RWPE1 (cell line): ENCODE measurements at regions of chr20 and their contacts with region 1.

Region 1: DNA sequence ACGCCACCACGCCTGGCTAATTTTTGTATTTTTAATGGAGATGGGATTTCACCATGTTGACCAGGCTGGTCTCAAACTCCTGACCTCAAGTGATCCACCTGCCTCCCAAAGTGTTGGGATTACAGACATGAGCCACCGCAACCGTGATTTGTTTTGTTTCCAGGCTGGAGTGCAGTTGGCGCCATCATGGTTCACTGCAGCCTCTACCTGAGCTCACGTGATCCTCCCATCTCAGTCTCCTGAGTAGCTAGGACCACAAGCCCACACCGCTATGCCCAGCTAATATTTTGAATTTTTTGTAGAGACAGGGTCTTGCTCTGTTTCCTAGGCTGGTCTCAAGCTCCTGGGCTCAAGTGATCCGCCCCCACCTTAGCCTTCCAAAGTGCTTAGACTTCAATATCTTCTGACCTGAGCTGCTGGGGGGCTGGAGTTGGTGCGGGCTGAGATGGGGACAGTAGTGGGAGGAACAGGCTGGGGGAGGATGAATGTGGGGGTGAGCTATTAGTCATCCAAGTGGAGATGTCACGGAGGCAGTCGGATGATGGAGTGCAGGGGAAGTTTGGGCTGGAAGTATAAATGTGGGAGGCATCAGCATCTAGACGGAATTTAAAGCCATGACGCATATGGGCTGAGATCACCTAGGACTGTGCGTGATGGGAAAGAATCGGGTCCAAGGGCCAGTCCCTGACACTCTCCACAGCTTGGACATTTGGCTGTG is 23.1 kb upstream of the ZMYND8 start:
- DNase-seq: no peak
- H3K27ac ChIP-seq: peak overlapping the region; percentile 67
- CTCF ChIP-seq: no peak

Region 2: DNA sequence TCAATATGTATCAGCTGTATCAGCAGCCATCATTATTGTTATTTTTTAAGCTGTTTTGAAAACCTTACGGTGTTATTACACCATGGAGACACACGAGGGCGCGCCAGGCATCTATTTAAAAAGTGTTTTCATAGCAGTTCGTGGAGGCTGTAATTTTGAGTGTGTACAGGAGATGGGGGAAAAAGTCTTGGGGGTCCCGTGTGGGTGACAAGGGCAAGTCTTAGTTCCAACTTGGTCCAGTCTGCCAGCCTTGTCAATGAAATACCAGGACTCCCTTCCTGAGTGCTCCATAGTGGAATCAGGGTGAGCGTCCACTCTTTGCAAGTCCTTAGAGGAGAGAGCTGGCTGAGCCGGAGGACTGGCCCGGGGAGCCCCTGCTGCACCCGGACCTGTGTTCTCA is 626.9 kb before region 1 on chr20:
- CTCF ChIA-PET with region 1: interaction called, 40 read pairs
- POLR2A ChIA-PET with region 1: no interaction called
- DNase-seq: peak; percentile 68
- H3K27ac ChIP-seq: no peak overlapping the region
- CTCF ChIP-seq: peak; percentile 95

Region 3: DNA sequence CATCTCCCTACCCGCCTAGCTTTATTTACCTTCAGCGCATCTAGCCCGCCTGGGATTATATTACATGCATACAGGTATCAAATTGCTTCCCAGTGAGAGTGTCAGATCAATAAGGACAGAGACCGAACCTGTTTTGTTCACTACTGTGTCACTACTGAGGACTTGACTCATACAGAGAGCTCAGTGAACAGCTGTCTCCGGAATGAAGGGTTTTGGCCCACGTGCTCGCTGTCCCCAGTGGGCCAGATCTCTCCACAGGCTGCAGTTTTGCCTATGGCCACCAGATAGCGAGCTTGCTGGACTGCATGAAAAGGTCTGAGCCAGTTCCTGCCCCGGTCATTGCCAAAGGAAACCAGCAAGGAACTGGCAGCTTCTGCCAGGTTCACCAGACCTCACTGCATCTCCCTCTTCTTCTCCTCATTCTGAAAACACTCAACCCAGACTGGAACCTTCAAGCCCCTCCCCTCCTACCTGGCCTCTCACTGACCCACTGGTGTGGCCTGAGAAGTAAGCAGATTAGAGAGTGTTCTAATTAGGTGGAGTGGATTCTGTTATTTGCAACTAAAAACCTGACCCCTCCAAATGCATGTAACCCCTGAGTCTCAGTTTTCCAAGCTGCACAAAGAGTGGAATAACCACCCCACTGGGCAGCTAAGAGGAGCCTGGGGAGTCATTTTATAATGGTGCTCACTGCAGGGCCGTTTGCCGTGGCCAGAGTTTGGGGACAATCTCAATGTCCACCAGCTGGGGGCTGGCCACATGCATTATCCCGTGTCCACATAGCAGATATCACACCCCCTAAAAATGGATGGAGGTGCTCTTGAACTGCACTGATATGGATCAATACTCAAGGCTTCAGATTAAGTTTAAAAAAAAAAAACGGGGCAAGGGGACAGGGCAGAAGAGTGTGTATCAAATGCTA is 173.8 kb before region 1 on chr20:
- CTCF ChIA-PET with region 1: interaction called, 50 read pairs
- POLR2A ChIA-PET with region 1: no interaction called
- DNase-seq: peak; percentile 71
- H3K27ac ChIP-seq: peak overlapping the region; percentile 51
- CTCF ChIP-seq: peak; percentile 82

Region 4: DNA sequence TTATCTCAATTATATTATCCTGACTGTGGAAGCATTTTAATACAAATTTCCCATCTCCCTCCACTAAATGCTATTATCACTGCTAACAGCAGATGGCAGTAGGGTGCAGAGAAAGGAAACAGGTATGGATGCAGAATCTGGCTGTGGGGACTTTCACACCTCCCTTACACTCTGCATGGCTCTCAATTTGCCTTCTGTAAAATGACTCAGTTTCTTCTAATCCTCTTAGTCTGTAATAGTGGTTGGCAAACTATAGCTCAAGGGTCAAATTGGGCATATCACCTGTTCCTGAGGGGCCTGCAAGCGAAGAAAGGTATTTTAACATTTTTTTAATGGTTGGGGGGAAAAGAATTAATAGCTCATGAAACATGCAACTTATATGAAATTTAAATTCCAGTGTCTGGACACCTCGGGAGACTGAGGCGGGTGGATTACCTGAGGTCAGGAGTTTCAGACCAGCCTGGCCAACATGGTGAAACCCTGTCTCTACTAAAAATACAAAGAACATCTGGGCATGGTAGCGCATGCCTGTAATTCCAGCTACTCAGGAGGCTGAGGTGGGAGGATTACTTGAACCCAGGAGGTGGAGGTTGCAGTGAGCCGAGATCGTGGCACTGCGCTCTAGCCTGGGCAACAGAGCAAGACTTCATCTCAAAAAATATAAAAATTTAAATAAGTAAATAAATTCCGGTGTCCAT is 106.5 kb before region 1 on chr20:
- CTCF ChIA-PET with region 1: interaction called, 387 read pairs
- POLR2A ChIA-PET with region 1: interaction called, 5 read pairs
- DNase-seq: peak; percentile 85
- H3K27ac ChIP-seq: peak overlapping the region; percentile 64
- CTCF ChIP-seq: peak; percentile 97

Region 5: DNA sequence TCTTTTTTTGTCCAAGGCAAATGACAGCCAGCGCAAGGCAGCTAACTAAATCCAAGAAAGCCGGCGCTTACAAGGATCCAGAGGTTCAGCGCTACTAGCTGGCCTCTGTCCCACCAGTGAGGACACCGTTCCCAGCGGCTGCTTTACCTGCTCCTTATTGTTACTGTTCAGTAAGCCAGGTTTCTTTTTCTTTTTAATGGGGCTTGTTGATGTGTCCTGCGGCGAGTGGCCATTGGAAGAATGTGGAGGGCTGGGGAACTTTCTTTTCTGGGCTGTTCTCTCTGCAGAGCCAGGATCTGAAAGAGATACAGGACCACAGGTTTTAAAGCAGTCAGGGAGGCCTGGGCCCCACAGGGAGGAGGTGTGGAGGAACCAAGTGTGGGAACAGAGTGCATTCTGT is 69.7 kb before region 1 on chr20:
- CTCF ChIA-PET with region 1: interaction called, 31 read pairs
- POLR2A ChIA-PET with region 1: no interaction called
- DNase-seq: no peak
- H3K27ac ChIP-seq: peak overlapping the region; percentile 100
- CTCF ChIP-seq: no peak

Region 6: DNA sequence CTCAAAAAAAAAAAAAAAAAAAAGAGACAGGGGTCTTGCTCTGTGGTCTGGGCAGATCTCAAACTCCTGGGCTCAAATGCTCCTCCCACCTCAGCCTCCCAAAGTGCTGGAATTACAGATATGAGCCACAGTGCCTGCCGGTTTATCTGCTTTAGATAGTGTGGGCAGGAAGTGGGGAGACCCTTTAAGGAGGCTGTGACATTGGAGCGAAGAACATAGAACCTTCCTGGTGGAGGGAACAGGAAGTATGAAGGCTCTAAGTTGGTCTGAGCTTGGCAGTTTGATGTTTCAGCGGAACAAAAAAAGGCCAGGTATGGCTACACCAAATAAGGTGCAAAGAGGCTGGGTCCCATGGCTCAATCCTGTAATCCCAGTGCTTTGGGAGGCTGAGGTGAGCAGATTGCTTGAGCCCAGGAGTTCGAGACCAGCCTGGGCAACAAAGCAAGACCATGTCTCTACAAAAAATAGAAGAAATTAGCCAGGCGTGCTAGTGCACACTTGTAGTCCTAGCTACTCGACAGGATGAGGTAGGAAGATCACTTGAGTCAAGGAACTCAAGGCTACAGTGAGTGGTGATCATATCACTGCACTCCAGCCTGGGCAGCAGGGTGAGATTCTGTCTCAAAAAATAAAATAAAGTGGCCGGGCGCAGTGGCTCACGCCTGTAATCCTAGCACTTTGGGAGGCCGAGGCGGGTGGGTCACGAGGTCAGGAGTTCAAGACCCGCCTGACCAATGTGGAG is 14.4 kb before region 1 on chr20:
- CTCF ChIA-PET with region 1: interaction called, 19 read pairs
- POLR2A ChIA-PET with region 1: interaction called, 9 read pairs
- DNase-seq: no peak
- H3K27ac ChIP-seq: peak overlapping the region; percentile 100
- CTCF ChIP-seq: no peak

Region 7: DNA sequence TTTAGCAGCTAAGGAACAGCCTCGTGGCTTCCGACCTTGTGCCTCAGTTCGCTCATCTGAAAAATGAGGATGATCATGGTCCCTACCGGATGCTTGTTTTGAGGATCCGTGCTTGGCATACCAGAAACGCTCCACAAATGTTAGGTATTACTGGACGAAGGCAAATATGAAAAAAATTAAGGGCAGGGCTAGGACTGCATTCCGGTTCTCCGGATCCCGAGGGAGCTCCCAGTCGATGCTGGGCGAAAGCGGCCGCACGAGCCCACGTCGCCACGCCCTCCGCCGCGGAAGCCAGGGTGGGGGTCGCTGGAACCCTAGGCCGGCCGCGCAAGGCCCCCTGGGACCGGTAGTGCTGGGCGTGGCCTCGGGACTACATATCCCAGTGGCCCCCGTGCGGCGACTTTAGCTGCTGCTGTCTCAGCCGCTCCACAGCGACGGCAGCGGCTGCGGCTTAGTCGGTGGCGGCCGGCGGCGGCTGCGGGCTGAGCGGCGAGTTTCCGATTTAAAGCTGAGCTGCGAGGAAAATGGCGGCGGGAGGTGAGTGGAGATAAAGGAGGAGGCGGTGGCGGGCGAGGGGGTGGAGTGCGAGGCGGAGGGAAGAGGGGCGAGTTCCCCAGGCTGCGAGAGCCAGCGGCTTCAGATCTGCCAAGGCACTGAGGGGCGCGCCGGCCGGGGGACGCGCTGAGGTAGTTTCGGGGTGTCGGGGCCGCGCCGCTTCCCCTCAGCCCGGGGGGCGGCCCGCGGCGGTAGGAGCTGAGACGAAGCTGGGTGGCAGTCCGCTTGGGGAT is 122.1 kb after region 1 on chr20 and contains the start of gene NCOA3:
- CTCF ChIA-PET with region 1: interaction called, 21 read pairs
- POLR2A ChIA-PET with region 1: no interaction called
- DNase-seq: peak; percentile 99
- H3K27ac ChIP-seq: peak within 1 kb of the TSS; percentile 91
- CTCF ChIP-seq: no peak; the same call in none of the 2 replicates